ENCODE measurements at regions of chr12 and their contacts with region 1.

Region 1: DNA sequence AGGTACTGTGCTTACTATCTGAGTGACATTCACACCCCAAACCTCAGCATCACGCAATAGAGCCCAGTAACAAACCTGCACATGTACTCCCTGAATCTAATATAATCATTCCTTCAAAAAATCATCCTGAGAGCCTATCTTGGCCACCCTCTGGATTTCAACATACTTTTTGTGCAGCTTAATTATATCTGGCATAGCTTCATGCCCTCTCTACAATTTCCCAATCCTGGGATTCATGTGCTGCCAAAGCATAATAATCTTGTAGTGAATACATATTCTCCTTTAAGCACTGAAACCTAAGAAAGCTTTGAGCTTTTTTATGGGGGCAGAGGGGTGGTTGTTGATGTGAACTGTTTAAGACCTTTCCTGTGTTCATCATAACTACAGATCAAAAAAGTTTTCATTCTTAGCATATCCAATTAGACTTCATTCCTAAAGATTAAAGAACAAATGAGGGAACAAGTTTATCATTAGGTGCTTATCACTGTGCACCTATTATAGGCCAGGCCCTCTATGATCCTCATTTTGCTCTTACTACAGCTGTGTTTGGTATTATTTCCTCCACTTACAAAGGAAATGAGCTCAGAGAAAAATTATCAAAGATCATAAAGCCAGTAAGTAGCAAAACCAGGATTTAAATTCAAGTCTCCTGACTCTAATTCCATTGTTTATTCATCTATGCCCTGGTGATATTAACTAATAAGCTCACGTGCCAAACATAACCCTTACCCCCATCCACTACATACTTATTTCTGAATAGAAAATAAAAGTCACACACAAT is 51.2 kb downstream of the SINHCAF start:
- DNase-seq: no peak
- H3K4me3 ChIP-seq: no peak overlapping the region
- H3K4me3 Mint-ChIP-seq: no peak overlapping the region
- H3K27ac ChIP-seq: no peak overlapping the region
- H3K27ac Mint-ChIP-seq: peak overlapping the region in 2 of 7 donors; percentile 14 to 44
- H3K4me1 ChIP-seq: no peaks in the 10 kb centered on the region
- H3K4me1 Mint-ChIP-seq: peaks cover 0 to 4% (median 0%) of the 10 kb centered on the region in 4 donors
- H3K27me3 ChIP-seq: no peaks in the 10 kb centered on the region
- H3K27me3 Mint-ChIP-seq: no peaks in the 10 kb centered on the region

Region 2: DNA sequence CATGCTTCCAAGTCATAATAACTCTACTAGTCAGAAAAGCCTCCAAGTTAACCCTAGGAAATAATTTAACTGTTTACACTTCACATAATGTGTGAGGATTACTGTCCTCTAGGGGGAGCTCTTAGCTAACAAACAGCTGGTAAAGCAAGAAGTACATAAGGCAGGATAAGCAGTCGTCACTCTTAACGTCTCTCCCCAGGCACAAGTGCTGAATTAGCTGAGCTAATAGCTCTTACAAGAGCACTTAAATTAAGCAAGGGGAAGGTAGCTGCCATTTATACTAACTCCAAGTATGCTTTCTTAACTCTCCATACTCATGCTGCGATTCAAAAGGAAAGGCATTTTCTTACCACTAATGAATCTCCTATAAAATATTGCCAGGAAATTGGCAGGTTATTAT is 427.5 kb before region 1 on chr12:
- CTCF ChIA-PET with region 1: interaction called, 68 read pairs
- POLR2A ChIA-PET with region 1: interaction called, 3 read pairs
- intact Hi-C with region 1: loop called (anchors 1 kb)
- DNase-seq: peak in 4 of 5 donors; percentile 52 to 62 (median 58)
- H3K4me3 ChIP-seq: no peak overlapping the region
- H3K4me3 Mint-ChIP-seq: no peak overlapping the region
- H3K27ac ChIP-seq: no peak overlapping the region
- H3K27ac Mint-ChIP-seq: no peak overlapping the region
- H3K4me1 ChIP-seq: no peaks in the 10 kb centered on the region
- H3K4me1 Mint-ChIP-seq: peaks cover 4 to 14% (median 9%) of the 10 kb centered on the region in 4 donors
- H3K27me3 ChIP-seq: no peaks in the 10 kb centered on the region
- H3K27me3 Mint-ChIP-seq: no peaks in the 10 kb centered on the region

Region 3: DNA sequence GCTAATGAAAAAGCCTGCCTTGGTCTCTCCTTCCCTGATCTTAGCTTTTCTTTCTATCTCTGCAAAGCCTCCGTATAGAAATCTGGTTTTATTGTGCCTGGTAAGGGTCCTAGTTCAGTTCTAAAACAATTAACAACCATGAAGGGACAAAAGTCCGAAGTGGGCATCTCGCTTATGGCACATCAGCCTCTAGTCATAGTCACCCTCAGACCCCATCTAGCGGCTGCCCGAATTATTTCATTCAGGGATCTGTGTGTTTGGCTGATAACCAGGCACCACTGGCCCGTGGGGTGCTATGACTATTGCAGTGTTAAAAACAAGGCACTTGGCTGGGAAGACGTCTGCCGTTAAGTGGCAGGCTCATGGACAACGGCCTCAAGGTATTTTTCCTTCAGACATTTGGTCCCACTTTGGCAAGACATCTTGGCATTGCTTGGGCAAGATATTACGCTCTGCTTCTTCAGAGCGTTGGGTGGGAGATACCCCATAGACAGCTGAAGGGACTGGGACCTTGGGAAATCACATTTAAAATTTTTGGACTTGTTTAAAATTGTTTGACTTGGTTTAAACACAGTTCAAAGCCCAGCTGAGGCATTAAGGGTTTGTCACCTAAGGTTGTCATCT is 35.8 kb before region 1 on chr12:
- CTCF ChIA-PET with region 1: interaction called, 24 read pairs
- POLR2A ChIA-PET with region 1: no interaction called
- intact Hi-C with region 1: no loop called
- DNase-seq: peak; percentile 19 to 63 (median 31)
- H3K4me3 ChIP-seq: no peak overlapping the region
- H3K4me3 Mint-ChIP-seq: peak overlapping the region in 2 of 8 donors; percentile 58 to 60
- H3K27ac ChIP-seq: no peak overlapping the region
- H3K27ac Mint-ChIP-seq: no peak overlapping the region
- H3K4me1 ChIP-seq: no peaks in the 10 kb centered on the region
- H3K4me1 Mint-ChIP-seq: peaks cover 0 to 5% (median 2%) of the 10 kb centered on the region in 4 donors
- H3K27me3 ChIP-seq: no peaks in the 10 kb centered on the region
- H3K27me3 Mint-ChIP-seq: peaks cover 21 to 34% of the 10 kb centered on the region in 2 donors

Region 4: DNA sequence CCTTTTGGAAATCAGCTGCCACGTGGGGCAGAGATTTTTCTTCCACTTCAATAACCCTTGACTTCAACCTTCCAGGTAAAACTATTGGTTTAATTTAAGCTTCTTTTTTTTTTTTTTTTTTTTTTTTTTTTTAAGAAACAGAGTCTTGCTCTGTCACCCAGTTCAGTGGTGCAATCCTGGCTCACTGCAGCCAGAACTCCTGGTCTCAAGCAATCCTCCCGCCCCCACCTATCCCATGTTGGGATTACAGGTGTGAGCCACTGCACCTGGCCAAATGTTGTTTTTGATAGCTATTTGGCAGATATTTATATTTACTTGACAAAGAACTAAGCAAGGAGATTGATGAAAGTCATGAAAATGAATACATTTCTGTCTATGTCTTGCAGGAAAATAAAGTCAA is 13.9 kb before region 1 on chr12:
- CTCF ChIA-PET with region 1: interaction called, 34 read pairs
- POLR2A ChIA-PET with region 1: no interaction called
- intact Hi-C with region 1: no loop called
- DNase-seq: no peak
- H3K4me3 ChIP-seq: no peak overlapping the region
- H3K4me3 Mint-ChIP-seq: no peak overlapping the region
- H3K27ac ChIP-seq: no peak overlapping the region
- H3K27ac Mint-ChIP-seq: no peak overlapping the region
- H3K4me1 ChIP-seq: no peaks in the 10 kb centered on the region
- H3K4me1 Mint-ChIP-seq: no peaks in the 10 kb centered on the region
- H3K27me3 ChIP-seq: no peaks in the 10 kb centered on the region
- H3K27me3 Mint-ChIP-seq: no peaks in the 10 kb centered on the region

Region 5: DNA sequence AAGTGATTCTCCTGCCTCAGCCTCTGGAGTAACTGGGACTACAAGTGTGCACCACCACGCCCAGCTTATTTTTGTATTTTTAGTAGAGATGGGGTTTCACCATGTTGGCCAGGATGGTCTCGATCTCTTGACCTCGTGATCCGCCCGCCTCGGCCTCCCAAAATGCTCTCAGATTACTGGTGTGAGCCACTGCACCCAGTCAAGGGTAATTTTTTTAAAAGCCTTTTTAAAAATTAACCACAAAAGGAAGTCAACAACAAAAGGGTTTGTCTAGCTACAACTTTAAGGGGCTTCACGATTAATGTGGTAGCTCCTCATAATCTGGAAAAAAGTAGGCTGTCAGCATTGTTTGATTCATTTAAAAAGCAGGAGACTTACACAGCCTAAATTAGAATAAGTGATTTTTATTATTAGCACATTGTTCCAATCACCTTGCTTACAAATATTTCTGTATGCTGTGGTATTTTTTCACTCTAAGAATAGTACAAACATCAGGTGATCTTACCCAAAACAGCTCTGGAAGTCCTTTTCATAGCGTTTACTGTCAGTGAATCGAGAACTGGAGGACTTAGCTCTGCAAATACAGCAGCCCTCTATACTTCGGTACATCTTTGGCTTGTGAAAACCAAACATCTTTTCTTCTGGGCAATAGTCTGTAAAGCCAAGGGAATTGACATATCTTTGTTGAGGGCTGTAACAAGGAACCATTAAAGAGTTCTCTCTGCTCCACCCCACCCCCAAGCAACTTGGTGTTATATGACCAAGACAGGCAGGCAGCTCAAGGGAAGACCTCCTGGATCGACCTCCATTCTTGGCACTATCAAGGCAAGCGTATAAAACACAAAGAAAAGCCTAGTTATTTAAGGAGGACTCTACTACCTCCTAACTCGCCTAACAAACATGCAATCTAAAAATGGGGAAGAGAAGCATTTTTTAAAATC is 23.1 kb after region 1 on chr12:
- CTCF ChIA-PET with region 1: interaction called, 45 read pairs
- POLR2A ChIA-PET with region 1: no interaction called
- intact Hi-C with region 1: no loop called
- DNase-seq: no peak
- H3K4me3 ChIP-seq: no peak overlapping the region
- H3K4me3 Mint-ChIP-seq: no peak overlapping the region
- H3K27ac ChIP-seq: no peak overlapping the region
- H3K27ac Mint-ChIP-seq: peak overlapping the region in 5 of 7 donors; percentile 44 to 85 (median 50)
- H3K4me1 ChIP-seq: no peaks in the 10 kb centered on the region
- H3K4me1 Mint-ChIP-seq: peaks cover 20 to 27% (median 23%) of the 10 kb centered on the region in 4 donors
- H3K27me3 ChIP-seq: no peaks in the 10 kb centered on the region
- H3K27me3 Mint-ChIP-seq: no peaks in the 10 kb centered on the region

Region 6: DNA sequence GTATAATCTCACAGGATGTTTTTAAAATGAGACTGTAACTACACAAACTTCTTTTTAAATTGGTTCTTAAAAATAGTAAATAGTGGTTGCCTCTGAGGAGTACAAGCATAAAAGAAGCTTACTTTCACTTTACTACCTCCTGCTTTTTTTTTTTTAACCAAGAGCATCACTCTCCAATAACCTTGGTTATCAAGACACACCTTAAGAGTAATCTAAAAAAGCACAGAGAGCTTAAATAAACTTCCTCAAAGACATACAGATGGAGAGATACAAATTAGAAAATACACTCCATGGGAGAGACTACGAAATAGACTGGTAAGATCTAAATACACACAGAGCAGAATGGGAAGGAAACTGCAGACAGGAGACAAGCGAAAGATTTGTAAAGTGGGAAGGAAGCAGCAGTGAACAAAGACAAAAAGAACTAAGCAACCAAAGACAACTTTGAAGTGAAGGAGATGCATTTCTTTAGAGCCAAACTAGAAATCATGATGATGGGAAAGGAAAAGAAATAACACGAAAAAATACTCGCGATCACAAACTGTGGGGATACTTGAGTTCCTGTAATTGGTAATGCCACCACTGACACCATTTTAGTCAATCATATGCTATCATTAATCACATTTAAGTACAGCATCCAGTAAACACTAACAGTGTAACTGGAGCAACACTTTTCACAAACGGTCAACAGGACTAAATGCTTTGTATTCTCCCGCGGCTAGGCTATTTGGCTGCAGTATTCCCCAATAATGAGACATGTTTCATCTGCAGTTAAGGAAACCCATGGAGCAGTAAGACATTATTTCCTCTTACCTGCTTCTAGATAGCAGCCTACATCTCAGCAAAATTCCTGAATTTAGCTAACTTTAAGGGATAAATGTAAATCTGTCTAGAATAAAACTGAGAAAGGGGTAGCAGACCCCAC is 43.0 kb after region 1 on chr12:
- CTCF ChIA-PET with region 1: interaction called, 27 read pairs
- POLR2A ChIA-PET with region 1: no interaction called
- intact Hi-C with region 1: no loop called
- DNase-seq: peak in 4 of 5 donors; percentile 31 to 48 (median 44)
- H3K4me3 ChIP-seq: peak overlapping the region; percentile 7 to 32
- H3K4me3 Mint-ChIP-seq: peak overlapping the region; percentile 81 to 91 (median 88)
- H3K27ac ChIP-seq: peak overlapping the region; percentile 50
- H3K27ac Mint-ChIP-seq: peak overlapping the region; percentile 87 to 97 (median 93)
- H3K4me1 ChIP-seq: peaks cover 74% of the 10 kb centered on the region
- H3K4me1 Mint-ChIP-seq: peaks cover 53 to 82% (median 75%) of the 10 kb centered on the region in 4 donors
- H3K27me3 ChIP-seq: no peaks in the 10 kb centered on the region
- H3K27me3 Mint-ChIP-seq: no peaks in the 10 kb centered on the region

Region 7: DNA sequence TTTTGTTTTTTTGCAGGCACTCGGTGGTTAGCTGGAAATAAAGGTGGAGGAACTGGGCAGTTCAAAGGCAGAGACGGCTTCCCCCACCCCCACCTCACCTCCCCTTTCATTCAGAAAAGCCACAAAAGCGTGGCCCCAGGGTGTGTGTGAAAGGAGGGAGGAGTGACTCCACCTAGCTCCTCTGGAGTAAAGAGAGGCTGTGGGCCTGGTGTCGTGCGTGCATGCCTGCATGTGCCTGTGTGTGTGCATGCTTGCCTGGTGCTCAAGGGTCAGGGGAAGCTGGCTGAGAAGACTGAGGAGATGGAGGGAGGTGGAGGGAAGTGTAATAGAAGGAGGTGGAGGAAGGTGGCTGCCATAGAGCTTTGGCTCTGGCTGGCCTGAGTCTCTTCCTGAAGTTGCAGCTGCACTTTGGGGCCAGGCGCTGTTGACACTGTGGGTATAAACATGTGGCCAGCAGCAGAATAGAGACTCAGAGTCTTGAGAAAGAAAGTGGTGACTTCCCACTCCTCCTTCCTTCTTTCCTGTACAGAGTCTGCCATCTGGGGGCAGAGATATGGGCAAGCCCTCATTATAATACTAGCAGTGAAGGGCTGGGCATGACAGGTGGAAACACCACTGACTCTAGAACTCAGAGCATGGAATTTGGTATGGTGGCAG is 88.2 kb after region 1 on chr12:
- CTCF ChIA-PET with region 1: interaction called, 11 read pairs
- POLR2A ChIA-PET with region 1: no interaction called
- intact Hi-C with region 1: no loop called
- DNase-seq: peak in 1 of 5 donors; percentile 0
- H3K4me3 ChIP-seq: peak overlapping the region in 1 of 2 donors; percentile 22
- H3K4me3 Mint-ChIP-seq: peak overlapping the region in 7 of 8 donors; percentile 59 to 78 (median 71)
- H3K27ac ChIP-seq: no peak overlapping the region
- H3K27ac Mint-ChIP-seq: peak overlapping the region in 5 of 7 donors; percentile 34 to 66 (median 50)
- H3K4me1 ChIP-seq: peaks cover 16% of the 10 kb centered on the region
- H3K4me1 Mint-ChIP-seq: peaks cover 9 to 19% (median 15%) of the 10 kb centered on the region in 4 donors
- H3K27me3 ChIP-seq: no peaks in the 10 kb centered on the region
- H3K27me3 Mint-ChIP-seq: peaks cover 0 to 1% of the 10 kb centered on the region in 2 donors

Measured in CD4-positive, alpha-beta memory T cell (primary cell).